Heart left ventricle (tissue), 16 donors: ENCODE measurements at regions of chr1 and their contacts with region 1.

Region 1: DNA sequence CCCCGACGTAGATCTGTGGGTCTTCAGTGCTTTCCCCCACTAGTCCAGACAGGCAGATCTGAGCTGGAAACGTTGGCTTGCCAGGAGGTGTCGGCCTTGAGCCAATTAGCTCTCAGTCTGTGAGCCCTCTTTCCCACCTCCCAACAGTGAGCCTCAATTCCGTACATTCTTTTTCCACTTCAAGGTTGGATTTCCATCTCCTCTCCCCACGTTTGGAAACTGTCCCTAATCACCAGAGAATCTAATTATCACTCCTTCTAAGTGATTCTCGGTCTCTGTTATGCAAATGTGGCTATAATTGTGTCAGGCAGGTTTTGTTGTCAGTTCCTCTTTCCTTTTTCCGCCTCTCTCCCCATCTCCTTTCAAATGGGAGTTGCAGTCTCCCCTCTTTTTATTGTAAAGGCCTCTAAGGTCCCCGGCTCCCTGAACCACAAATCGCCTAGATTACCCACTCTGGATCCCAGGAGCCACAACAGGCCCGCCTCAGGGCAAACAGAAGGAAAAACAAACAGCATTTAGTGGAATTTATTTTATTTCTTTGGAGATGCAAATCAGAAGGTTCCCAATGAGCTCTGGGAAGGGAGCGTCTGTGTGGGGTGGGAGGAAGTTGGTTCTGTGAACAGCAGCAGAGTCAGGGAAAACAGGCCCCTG is 29.4 kb upstream of the LRRN2 start:
- DNase-seq: no peak
- ATAC-seq: no peak
- H3K4me3 ChIP-seq: no peak overlapping the region
- H3K27ac ChIP-seq: no peak overlapping the region
- H3K4me1 ChIP-seq: peaks cover 0 to 13% (median 0%) of the 10 kb centered on the region in 12 donors
- H3K27me3 ChIP-seq: peaks cover 0 to 50% (median 19%) of the 10 kb centered on the region in 9 donors
- CTCF ChIP-seq: no peak
- POLR2A ChIP-seq: no peak

Region 2: DNA sequence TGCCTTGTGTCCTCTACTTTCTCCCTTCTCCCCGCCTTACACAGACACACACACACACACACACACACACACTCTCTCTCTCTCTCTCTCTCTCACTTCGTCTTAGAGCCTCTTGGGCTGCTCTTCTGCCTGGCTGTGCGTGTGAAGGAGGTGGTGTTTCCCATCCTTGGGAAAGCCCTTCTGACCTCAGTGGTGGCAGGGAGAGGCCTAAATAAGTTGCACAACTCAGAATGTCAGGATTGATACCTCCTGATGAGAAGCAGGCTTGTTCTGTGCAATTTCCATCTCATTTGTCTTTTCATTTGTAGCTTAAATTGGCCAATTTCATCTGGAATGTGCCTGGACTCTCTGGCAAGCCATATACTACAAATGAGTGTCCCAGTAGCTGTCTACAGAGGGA is 54.5 kb before region 1 on chr1:
- intact Hi-C with region 1: loop called in 1 of 10 experiments (anchors 5 kb)
- DNase-seq: no peak
- ATAC-seq: no peak
- H3K4me3 ChIP-seq: no peak overlapping the region
- H3K27ac ChIP-seq: peak overlapping the region in 1 of 12 donors; percentile 17
- H3K4me1 ChIP-seq: no peaks in the 10 kb centered on the region
- H3K27me3 ChIP-seq: no peaks in the 10 kb centered on the region
- CTCF ChIP-seq: no peak
- POLR2A ChIP-seq: no peak